ENCODE measurements at regions of chr5 and their contacts with region 1.

Region 1: GRCh38 chr5:132729896-132730295 is 7.5 kb downstream of the KIF3A start:
- DNase-seq: no peak
- CTCF ChIP-seq: no peak

Region 2: DNA sequence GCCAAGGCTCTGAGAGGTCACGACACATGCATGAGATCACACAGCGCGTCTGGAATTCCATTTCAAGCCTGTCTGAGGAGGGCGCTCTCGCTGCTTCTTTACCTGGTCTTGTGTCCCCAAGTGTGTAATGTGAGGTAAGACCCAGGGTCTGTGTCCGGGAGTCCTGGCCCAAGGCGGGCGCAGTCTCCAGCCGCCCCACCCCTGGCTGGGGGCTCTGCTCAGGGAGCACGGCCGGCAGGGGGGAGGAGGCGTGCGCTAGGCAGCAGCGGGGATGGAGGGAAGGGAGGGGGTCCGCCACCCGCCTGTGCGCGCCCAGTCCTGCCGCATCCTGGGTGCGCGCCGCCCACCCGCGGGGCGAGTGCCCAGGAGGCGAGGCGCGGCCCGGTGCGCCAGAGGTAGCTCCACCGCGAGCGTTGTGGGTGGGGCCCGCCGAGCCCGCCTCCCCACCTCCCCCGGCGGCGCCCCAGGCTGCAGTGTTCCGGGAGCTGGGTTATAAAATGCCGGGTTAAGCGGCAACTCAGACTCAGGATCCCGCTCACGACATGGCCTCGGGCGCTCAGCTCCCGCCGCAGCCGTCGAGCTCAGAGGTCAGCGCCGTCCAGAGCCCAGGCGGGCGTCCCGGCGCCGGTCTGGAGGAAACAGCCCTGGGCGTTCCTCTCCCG is 17.2 kb after region 1 on chr5 and contains the start of gene CCNI2:
- CTCF ChIA-PET with region 1: interaction called, 10 read pairs
- POLR2A ChIA-PET with region 1: no interaction called
- DNase-seq: peak; percentile 73
- CTCF ChIP-seq: no peak

Measured in GM10248 (cell line).